Caco-2 (cell line): ENCODE measurements at regions of chr12 and their contacts with region 1.

Region 1: GRCh38 chr12:52924764-52925716 is 20.2 kb upstream of the KRT8 start:
- DNase-seq: peak; percentile 92 to 96
- H3K4me3 ChIP-seq: peak overlapping the region; percentile 13
- H3K4me3 Mint-ChIP-seq: peak overlapping the region; percentile 64
- H3K27ac Mint-ChIP-seq: peak overlapping the region; percentile 98
- H3K4me1 ChIP-seq: peaks cover 80% of the 10 kb centered on the region
- H3K4me1 Mint-ChIP-seq: peaks cover 56% of the 10 kb centered on the region
- H3K27me3 ChIP-seq: no peaks in the 10 kb centered on the region
- H3K27me3 Mint-ChIP-seq: no peaks in the 10 kb centered on the region
- CTCF ChIP-seq: no peak

Region 2: GRCh38 chr12:52050761-52051541 is 874.1 kb before region 1 on chr12 and contains the start of gene NR4A1:
- CTCF ChIA-PET with region 1: no interaction called
- POLR2A ChIA-PET with region 1: no interaction called
- intact Hi-C with region 1: loop called (anchors 5 kb)
- DNase-seq: peak; percentile 97 to 99
- H3K4me3 ChIP-seq: peak within 1 kb of the TSS; percentile 60
- H3K4me3 Mint-ChIP-seq: peak within 1 kb of the TSS; percentile 84
- H3K27ac Mint-ChIP-seq: peak within 1 kb of the TSS; percentile 68
- H3K4me1 ChIP-seq: peaks cover 23% of the 10 kb centered on the region
- H3K4me1 Mint-ChIP-seq: peaks cover 22% of the 10 kb centered on the region
- H3K27me3 ChIP-seq: no peaks in the 10 kb centered on the region
- H3K27me3 Mint-ChIP-seq: no peaks in the 10 kb centered on the region
- CTCF ChIP-seq: peak in 1 of 2 experiments; percentile 46
- total RNA-seq, gene NR4A1: 37.9 and 41.8 TPM in 2 replicates

Region 3: GRCh38 chr12:52413788-52414345 is 511.2 kb before region 1 on chr12:
- CTCF ChIA-PET with region 1: no interaction called
- POLR2A ChIA-PET with region 1: no interaction called
- intact Hi-C with region 1: no loop called
- DNase-seq: no peak
- H3K4me3 ChIP-seq: no peak overlapping the region
- H3K4me3 Mint-ChIP-seq: no peak overlapping the region
- H3K27ac Mint-ChIP-seq: no peak overlapping the region
- H3K4me1 ChIP-seq: no peaks in the 10 kb centered on the region
- H3K4me1 Mint-ChIP-seq: peaks cover 5% of the 10 kb centered on the region
- H3K27me3 ChIP-seq: no peaks in the 10 kb centered on the region
- H3K27me3 Mint-ChIP-seq: no peaks in the 10 kb centered on the region
- CTCF ChIP-seq: peak in 1 of 2 experiments; percentile 2

Region 4: GRCh38 chr12:52895061-52895887 is 29.8 kb before region 1 on chr12:
- CTCF ChIA-PET with region 1: interaction called, 6 read pairs
- POLR2A ChIA-PET with region 1: interaction called, 20 read pairs
- intact Hi-C with region 1: no loop called
- DNase-seq: peak; percentile 88 to 93
- H3K4me3 ChIP-seq: no peak overlapping the region
- H3K4me3 Mint-ChIP-seq: peak overlapping the region; percentile 45
- H3K27ac Mint-ChIP-seq: peak overlapping the region; percentile 83
- H3K4me1 ChIP-seq: peaks cover 53% of the 10 kb centered on the region
- H3K4me1 Mint-ChIP-seq: peaks cover 39% of the 10 kb centered on the region
- H3K27me3 ChIP-seq: no peaks in the 10 kb centered on the region
- H3K27me3 Mint-ChIP-seq: peaks cover 2% of the 10 kb centered on the region
- CTCF ChIP-seq: no peak

Region 5: GRCh38 chr12:52913076-52913821 is 11.8 kb before region 1 on chr12:
- CTCF ChIA-PET with region 1: interaction called, 6 read pairs
- POLR2A ChIA-PET with region 1: interaction called, 231 read pairs
- intact Hi-C with region 1: loop called (anchors 1 kb)
- DNase-seq: peak; percentile 70 to 82
- H3K4me3 ChIP-seq: no peak overlapping the region
- H3K4me3 Mint-ChIP-seq: peak overlapping the region; percentile 4
- H3K27ac Mint-ChIP-seq: peak overlapping the region; percentile 55
- H3K4me1 ChIP-seq: peaks cover 71% of the 10 kb centered on the region
- H3K4me1 Mint-ChIP-seq: peaks cover 62% of the 10 kb centered on the region
- H3K27me3 ChIP-seq: no peaks in the 10 kb centered on the region
- H3K27me3 Mint-ChIP-seq: no peaks in the 10 kb centered on the region
- CTCF ChIP-seq: no peak

Region 6: DNA sequence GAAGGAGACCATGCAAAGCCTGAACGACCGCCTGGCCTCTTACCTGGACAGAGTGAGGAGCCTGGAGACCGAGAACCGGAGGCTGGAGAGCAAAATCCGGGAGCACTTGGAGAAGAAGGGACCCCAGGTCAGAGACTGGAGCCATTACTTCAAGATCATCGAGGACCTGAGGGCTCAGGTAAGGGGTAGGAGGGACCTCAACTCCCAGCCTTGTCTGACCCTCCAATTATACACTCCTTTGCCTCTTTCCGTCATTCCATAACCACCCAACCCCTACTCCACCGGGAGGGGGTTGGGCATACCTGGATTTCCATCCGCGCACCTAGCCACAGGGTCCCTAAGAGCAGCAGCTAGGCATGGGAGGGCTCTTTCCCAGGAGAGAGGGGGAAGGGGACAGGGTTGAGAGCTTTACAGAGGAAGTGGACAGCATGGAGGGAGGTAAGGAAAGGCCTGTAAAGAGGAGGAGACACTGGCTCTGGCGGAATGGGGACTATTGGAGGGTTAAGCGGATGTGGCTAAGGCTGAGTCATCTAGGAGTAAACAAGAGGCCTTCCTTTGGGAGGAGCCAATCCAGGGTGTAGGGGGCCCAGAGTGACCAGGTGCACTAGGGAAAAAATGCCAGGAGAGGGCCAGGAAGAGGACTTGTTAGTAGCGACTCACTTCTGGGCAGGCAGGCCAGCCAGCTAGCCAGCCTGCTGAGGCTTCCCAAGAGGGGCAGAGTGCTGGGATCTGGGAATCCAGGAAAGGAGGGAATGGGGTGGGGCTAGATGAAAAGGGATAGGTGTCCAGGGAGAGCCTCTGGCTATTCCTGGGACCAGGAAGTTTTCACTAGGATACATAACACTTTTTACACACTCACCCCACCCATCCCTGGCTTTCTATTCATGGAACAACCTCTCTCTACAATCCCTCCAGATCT is 24.6 kb after region 1 on chr12:
- CTCF ChIA-PET with region 1: interaction called, 71 read pairs
- POLR2A ChIA-PET with region 1: interaction called, 457 read pairs
- intact Hi-C with region 1: loop called (anchors 1 kb)
- DNase-seq: peak; percentile 77 to 83
- H3K4me3 ChIP-seq: peak overlapping the region; percentile 72
- H3K4me3 Mint-ChIP-seq: peak overlapping the region; percentile 89
- H3K27ac Mint-ChIP-seq: peak overlapping the region; percentile 99
- H3K4me1 ChIP-seq: peaks cover 50% of the 10 kb centered on the region
- H3K4me1 Mint-ChIP-seq: peaks cover 29% of the 10 kb centered on the region
- H3K27me3 ChIP-seq: no peaks in the 10 kb centered on the region
- H3K27me3 Mint-ChIP-seq: no peaks in the 10 kb centered on the region
- CTCF ChIP-seq: no peak

Region 7: DNA sequence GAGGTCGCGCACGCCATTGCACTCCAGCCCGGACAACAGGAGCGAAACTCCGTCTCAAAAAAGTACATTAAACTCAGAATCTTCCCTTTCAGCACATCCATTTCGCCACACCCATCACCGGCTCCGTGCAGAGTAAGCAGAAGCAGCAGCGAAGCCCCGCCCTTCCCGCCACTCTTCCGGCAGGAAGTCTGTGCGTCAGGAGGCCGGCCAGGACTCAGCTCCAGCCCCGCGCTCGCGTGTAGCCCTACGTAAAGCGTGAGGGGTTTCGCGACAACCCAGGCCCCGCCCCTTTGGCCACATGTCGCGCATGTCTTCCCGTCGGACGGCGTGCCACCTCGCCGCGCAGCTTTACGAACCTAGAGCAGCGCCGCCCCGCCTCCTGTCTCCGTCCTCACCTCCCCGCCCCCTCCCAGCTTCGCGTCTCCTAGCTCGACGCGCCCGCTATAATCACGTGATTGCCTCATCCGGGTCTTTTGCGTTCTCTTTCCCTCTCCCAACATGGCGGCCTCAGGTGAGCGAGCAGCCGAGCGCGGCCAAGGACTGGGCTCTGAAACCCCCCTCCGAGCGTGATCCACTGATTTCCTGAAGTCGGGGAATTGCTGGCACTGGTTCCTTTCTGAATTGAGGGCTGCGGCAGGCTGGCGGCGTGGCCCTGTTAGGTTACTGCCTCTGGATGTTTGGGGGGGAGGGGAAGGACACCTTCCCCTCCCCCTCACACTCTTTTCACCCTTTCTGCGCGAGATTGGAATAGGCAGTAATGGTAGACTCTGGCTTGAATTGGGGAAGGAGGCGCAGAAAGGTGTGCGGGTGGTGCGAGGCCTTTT is 81.2 kb after region 1 on chr12 and contains the start of gene EIF4B:
- CTCF ChIA-PET with region 1: no interaction called
- POLR2A ChIA-PET with region 1: interaction called, 14 read pairs
- intact Hi-C with region 1: no loop called
- DNase-seq: peak; percentile 99 to 100
- H3K4me3 ChIP-seq: peak within 1 kb of the TSS; percentile 98
- H3K4me3 Mint-ChIP-seq: peak within 1 kb of the TSS; percentile 97
- H3K27ac Mint-ChIP-seq: peak within 1 kb of the TSS; percentile 99
- H3K4me1 ChIP-seq: peaks cover 44% of the 10 kb centered on the region
- H3K4me1 Mint-ChIP-seq: peaks cover 24% of the 10 kb centered on the region
- H3K27me3 ChIP-seq: no peaks in the 10 kb centered on the region
- H3K27me3 Mint-ChIP-seq: no peaks in the 10 kb centered on the region
- CTCF ChIP-seq: no peak
- total RNA-seq, gene EIF4B: 445 and 452 TPM in 2 replicates

Region 8: GRCh38 chr12:53123578-53124351 is 198.7 kb after region 1 on chr12:
- CTCF ChIA-PET with region 1: no interaction called
- POLR2A ChIA-PET with region 1: no interaction called
- intact Hi-C with region 1: no loop called
- DNase-seq: no peak
- H3K4me3 ChIP-seq: no peak overlapping the region
- H3K4me3 Mint-ChIP-seq: no peak overlapping the region
- H3K27ac Mint-ChIP-seq: peak overlapping the region; percentile 3
- H3K4me1 ChIP-seq: peaks cover 15% of the 10 kb centered on the region; the same call in 1 of the 2 replicates
- H3K4me1 Mint-ChIP-seq: peaks cover 20% of the 10 kb centered on the region
- H3K27me3 ChIP-seq: no peaks in the 10 kb centered on the region
- H3K27me3 Mint-ChIP-seq: peaks cover 5% of the 10 kb centered on the region
- CTCF ChIP-seq: no peak